ENCODE measurements at regions of chr21 and their contacts with region 1.

Region 1: DNA sequence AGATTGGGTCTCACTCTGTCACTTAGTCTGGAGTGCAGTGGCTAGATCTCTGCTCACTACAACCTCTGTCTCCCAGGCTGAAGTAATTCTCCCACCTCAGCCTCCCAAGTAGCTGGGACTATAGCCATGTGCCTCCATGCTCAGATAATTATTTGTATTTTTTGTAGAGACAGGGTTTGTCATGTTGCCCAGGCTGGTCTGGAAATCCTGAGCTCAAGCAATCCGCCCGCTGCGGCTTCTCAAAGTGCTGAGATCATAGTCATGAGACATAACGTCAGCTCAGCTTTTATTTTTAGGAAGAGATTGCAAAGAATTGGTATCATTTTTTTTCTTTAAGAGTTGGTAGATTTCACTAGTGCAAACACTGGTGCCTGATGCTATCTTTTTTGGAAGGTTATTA is 244.9 kb downstream of the DSCAM start:
- DNase-seq: no peak
- H3K4me3 Mint-ChIP-seq: no peak overlapping the region
- H3K27ac Mint-ChIP-seq: no peak overlapping the region
- H3K4me1 Mint-ChIP-seq: no peaks in the 10 kb centered on the region
- H3K27me3 Mint-ChIP-seq: no peaks in the 10 kb centered on the region
- CTCF ChIP-seq: no peak

Region 2: GRCh38 chr21:39809941-39810340 is 792.1 kb before region 1 on chr21:
- CTCF ChIA-PET with region 1: no interaction called
- POLR2A ChIA-PET with region 1: no interaction called
- intact Hi-C with region 1: no loop called
- DNase-seq: no peak
- H3K4me3 Mint-ChIP-seq: no peak overlapping the region
- H3K27ac Mint-ChIP-seq: no peak overlapping the region
- H3K4me1 Mint-ChIP-seq: no peaks in the 10 kb centered on the region
- H3K27me3 Mint-ChIP-seq: no peaks in the 10 kb centered on the region
- CTCF ChIP-seq: no peak

Region 3: DNA sequence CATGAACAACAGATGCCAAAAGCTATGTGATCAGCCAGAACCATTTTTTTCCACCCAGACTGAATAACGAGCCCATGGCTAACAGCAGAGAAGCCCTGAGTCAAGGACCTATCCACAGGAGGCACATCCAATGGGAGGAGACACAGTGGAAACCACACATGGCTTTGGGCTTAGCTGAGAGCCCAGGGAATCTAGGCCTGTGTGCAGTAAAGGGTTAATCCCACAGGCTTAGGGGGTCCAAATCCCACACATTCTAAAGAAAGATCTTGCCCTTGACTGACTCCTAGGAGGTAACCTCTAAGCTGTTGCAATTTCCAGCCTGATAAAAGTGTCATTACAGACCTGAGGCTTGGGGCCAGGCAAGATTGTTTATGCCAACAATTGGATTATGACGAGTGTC is 50.4 kb after region 1 on chr21:
- CTCF ChIA-PET with region 1: no interaction called
- POLR2A ChIA-PET with region 1: no interaction called
- intact Hi-C with region 1: loop called (anchors 2 kb)
- DNase-seq: no peak
- H3K4me3 Mint-ChIP-seq: no peak overlapping the region
- H3K27ac Mint-ChIP-seq: no peak overlapping the region
- H3K4me1 Mint-ChIP-seq: no peaks in the 10 kb centered on the region
- H3K27me3 Mint-ChIP-seq: no peaks in the 10 kb centered on the region
- CTCF ChIP-seq: no peak